Mammary epithelial cell (primary cell): ENCODE measurements at regions of chr1 and their contacts with region 1.

Region 1: DNA sequence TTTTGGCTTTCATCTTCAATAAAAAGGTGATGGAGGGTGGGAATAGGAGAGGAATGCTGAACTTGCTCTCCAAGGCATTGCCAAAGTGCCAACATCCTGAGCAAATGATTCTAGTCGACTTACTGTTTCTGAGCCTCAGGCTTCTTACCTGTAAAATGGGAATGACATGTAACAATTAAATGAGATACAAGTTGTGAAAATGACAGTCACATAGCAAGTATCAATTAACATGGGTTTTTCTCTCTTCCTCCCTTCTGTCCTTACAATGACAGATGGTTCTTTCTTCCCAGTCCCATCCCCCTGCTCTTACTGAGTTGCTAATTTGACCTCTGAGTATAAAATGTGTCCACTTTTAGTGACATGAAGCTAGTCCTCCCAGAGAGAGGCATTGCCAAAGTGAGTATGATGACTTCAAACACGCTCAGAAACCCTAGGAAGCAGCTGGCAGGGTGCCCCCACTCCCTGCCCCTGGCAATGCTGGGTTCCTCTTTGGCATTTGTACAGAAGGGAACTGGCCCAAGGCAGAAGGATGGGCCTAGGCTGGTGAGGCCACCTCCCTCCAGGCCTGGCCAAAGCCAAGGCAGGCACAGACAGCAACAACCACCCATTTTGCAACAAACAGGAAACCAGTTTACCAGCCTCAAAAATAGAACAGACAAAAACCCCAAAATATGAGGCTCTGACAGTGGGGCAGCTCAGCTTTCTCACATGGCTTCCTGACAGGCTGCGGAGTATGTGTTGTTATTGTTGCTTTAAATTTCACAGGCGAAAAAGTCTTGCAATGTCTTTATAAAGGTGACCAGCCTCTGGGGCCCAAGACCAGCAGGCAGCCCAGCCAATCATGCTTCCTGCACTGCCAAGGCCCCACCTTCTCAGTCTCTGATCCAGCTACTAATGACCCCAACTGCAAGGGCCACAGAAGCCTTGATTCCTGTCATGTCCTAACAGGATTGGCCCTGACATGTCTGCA is 115.9 kb downstream of the HIVEP3 start:
- DNase-seq: peak; percentile 56
- H3K4me3 ChIP-seq: no peak overlapping the region
- H3K27ac ChIP-seq: peak overlapping the region; percentile 31
- H3K4me1 ChIP-seq: peaks cover 37% of the 10 kb centered on the region
- H3K27me3 ChIP-seq: no peaks in the 10 kb centered on the region
- CTCF ChIP-seq: no peak

Region 2: GRCh38 chr1:41618091-41618825 is 184.6 kb before region 1 on chr1:
- CTCF ChIA-PET with region 1: no interaction called
- dilution Hi-C with region 1: no loop called
- in situ Hi-C with region 1: no loop called
- intact Hi-C with region 1: no loop called
- DNase-seq: peak; percentile 62
- H3K4me3 ChIP-seq: no peak overlapping the region
- H3K27ac ChIP-seq: no peak overlapping the region
- H3K4me1 ChIP-seq: peaks cover 49% of the 10 kb centered on the region
- H3K27me3 ChIP-seq: no peaks in the 10 kb centered on the region
- CTCF ChIP-seq: no peak

Region 3: GRCh38 chr1:41758904-41759548 is 43.8 kb before region 1 on chr1:
- CTCF ChIA-PET with region 1: no interaction called
- dilution Hi-C with region 1: loop called (anchors 5 kb)
- in situ Hi-C with region 1: no loop called
- intact Hi-C with region 1: no loop called
- DNase-seq: peak; percentile 77
- H3K4me3 ChIP-seq: no peak overlapping the region
- H3K27ac ChIP-seq: no peak overlapping the region
- H3K4me1 ChIP-seq: peaks cover 7% of the 10 kb centered on the region
- H3K27me3 ChIP-seq: no peaks in the 10 kb centered on the region
- CTCF ChIP-seq: no peak

Region 4: DNA sequence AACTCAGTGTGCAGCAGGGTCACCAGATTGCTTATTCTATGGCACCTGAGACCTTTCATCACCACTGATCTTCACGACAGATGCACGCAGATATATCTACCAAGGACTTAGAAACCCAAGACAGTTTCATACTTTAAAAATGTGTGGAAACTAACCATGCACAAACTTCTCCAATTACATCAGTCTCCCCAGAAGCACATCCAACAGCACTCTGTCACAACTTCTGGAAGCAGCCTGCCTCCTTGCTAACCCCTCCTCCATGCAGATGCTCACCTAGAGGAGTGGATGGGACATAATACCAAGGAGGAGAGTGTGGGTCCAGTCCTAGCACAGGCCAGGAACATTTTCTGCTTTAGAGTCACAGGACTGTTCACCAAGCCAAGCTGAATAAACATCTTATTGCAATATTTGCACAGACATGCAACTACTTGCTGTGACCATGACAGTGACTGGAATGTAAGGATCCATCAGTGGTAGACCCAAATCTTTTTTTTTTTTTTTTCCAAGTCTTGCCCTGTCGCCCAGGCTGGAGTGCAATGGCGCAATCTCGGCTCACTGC is 46.5 kb after region 1 on chr1:
- CTCF ChIA-PET with region 1: interaction called, 17 read pairs
- dilution Hi-C with region 1: no loop called
- in situ Hi-C with region 1: no loop called
- intact Hi-C with region 1: no loop called
- DNase-seq: peak; percentile 19
- H3K4me3 ChIP-seq: no peak overlapping the region
- H3K27ac ChIP-seq: no peak overlapping the region
- H3K4me1 ChIP-seq: peaks cover 40% of the 10 kb centered on the region
- H3K27me3 ChIP-seq: no peaks in the 10 kb centered on the region
- CTCF ChIP-seq: no peak

Region 5: GRCh38 chr1:41859686-41860085 is 56.9 kb after region 1 on chr1:
- CTCF ChIA-PET with region 1: no interaction called
- dilution Hi-C with region 1: no loop called
- in situ Hi-C with region 1: no loop called
- intact Hi-C with region 1: no loop called
- DNase-seq: peak; percentile 68
- H3K4me3 ChIP-seq: no peak overlapping the region
- H3K27ac ChIP-seq: no peak overlapping the region
- H3K4me1 ChIP-seq: peaks cover 66% of the 10 kb centered on the region
- H3K27me3 ChIP-seq: no peaks in the 10 kb centered on the region
- CTCF ChIP-seq: no peak

Region 6: GRCh38 chr1:41876576-41877445 is 74.0 kb after region 1 on chr1:
- CTCF ChIA-PET with region 1: no interaction called
- dilution Hi-C with region 1: no loop called
- in situ Hi-C with region 1: no loop called
- intact Hi-C with region 1: no loop called
- DNase-seq: no peak
- H3K4me3 ChIP-seq: no peak overlapping the region
- H3K27ac ChIP-seq: no peak overlapping the region
- H3K4me1 ChIP-seq: peaks cover 7% of the 10 kb centered on the region
- H3K27me3 ChIP-seq: no peaks in the 10 kb centered on the region
- CTCF ChIP-seq: no peak

Region 7: GRCh38 chr1:41891199-41891896 is 88.5 kb after region 1 on chr1:
- CTCF ChIA-PET with region 1: no interaction called
- dilution Hi-C with region 1: no loop called
- in situ Hi-C with region 1: no loop called
- intact Hi-C with region 1: no loop called
- DNase-seq: peak; percentile 55
- H3K4me3 ChIP-seq: peak overlapping the region; percentile 0 to 30 (median 17)
- H3K27ac ChIP-seq: peak overlapping the region; percentile 64
- H3K4me1 ChIP-seq: peaks cover 33% of the 10 kb centered on the region
- H3K27me3 ChIP-seq: no peaks in the 10 kb centered on the region
- CTCF ChIP-seq: peak in 1 of 2 donors; percentile 18